ENCODE measurements at regions of chr7 and their contacts with region 1.

Region 1: GRCh38 chr7:43582503-43583423 is at the start of gene STK17A:
- DNase-seq: peak; percentile 85
- ATAC-seq: peak; percentile 94
- H3K4me3 ChIP-seq: peak within 1 kb of the TSS; percentile 91
- H3K27ac ChIP-seq: peak within 1 kb of the TSS; percentile 78
- H3K4me1 ChIP-seq: no peaks in the 10 kb centered on the region; the same call in 1 of the 2 replicates
- H3K27me3 ChIP-seq: peaks cover 2% of the 10 kb centered on the region; the same call in 1 of the 2 replicates
- CTCF ChIP-seq: peak; percentile 100
- POLR2A ChIP-seq: peak; percentile 99
- RAD21 ChIP-seq: peak; percentile 97
- total RNA-seq, gene STK17A: 50.5 and 81.9 TPM in 2 replicates

Region 2: DNA sequence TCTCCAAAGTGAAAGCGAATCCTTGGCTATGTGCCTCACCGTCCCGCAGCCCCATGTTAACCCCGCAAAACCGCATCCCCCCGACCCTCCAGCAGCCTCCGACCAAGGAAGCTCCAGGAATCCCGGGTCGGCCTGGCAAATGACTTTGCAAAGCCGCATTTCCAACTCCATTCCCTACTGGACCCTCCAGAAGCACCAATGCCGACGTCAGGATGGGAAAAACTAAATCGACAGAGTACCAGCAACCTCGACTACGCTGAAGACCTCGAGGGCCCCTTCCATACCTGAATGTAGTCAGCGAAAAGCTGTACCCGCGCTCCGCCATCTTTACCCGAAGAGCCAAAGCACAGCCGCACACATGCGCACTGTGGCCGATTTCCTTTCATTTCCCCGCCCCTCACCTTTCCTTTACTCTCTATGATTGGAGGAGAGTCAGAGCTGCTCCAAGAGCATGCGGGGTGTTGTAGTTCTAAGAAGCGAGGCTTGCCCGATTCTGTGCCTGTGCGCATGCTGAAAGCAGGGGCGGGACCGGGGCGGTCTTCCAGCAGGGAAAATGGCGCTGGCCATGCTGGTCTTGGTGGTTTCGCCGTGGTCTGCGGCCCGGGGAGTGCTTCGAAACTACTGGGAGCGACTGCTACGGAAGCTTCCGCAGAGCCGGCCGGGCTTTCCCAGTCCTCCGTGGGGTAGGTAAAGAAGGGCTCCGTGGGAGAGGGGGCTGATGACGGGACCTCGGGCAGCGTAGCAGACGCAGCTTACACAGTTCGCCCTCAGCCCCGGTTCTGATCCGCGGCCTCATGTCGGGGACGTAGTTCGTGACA is 650.7 kb before region 1 on chr7 and contains the starts of genes MRPL32 and PSMA2:
- CTCF ChIA-PET with region 1: no interaction called
- POLR2A ChIA-PET with region 1: no interaction called
- dilution Hi-C with region 1: no loop called
- in situ Hi-C with region 1: no loop called
- intact Hi-C with region 1: loop called (anchors 10 kb)
- DNase-seq: peak; percentile 97
- ATAC-seq: peak; percentile 99
- H3K4me3 ChIP-seq: peak within 1 kb of the TSS; percentile 69
- H3K27ac ChIP-seq: peak within 1 kb of the TSS; percentile 83
- H3K4me1 ChIP-seq: peaks cover 4% of the 10 kb centered on the region
- H3K27me3 ChIP-seq: no peaks in the 10 kb centered on the region
- CTCF ChIP-seq: no peak
- POLR2A ChIP-seq: peak; percentile 81
- RAD21 ChIP-seq: no peak
- total RNA-seq, gene MRPL32: 42.3 and 56.7 TPM in 2 replicates
- total RNA-seq, gene PSMA2: 138 and 217 TPM in 2 replicates

Region 3: DNA sequence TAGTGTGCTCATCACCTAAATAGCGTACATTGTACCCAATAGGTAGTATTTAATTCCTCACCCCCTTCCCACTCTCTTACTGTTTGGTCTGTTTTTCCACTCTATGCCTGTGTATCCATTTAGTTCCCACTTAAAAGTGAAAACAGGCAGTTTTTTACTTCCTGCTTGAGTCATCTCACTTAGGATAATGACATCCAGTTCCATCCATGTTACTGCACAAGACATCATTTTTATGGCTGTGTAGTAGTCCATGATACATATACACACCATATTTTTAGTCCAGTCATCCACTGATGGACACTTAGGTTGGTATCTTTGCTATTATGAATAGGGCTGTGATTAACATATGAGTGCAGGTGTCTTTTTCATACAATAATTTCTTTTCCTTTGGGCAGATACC is 10.2 kb after region 1 on chr7:
- CTCF ChIA-PET with region 1: interaction called, 10 read pairs
- POLR2A ChIA-PET with region 1: interaction called, 9 read pairs
- dilution Hi-C with region 1: no loop called
- in situ Hi-C with region 1: no loop called
- intact Hi-C with region 1: no loop called
- DNase-seq: no peak
- ATAC-seq: no peak
- H3K4me3 ChIP-seq: no peak overlapping the region
- H3K27ac ChIP-seq: no peak overlapping the region
- H3K4me1 ChIP-seq: peaks cover 12% of the 10 kb centered on the region
- H3K27me3 ChIP-seq: no peaks in the 10 kb centered on the region
- CTCF ChIP-seq: no peak
- POLR2A ChIP-seq: no peak
- RAD21 ChIP-seq: no peak

Region 4: GRCh38 chr7:43621729-43622448 is 39.1 kb after region 1 on chr7:
- CTCF ChIA-PET with region 1: interaction called, 15 read pairs
- POLR2A ChIA-PET with region 1: interaction called, 11 read pairs
- dilution Hi-C with region 1: no loop called
- in situ Hi-C with region 1: no loop called
- intact Hi-C with region 1: no loop called
- DNase-seq: no peak
- ATAC-seq: no peak
- H3K4me3 ChIP-seq: no peak overlapping the region
- H3K27ac ChIP-seq: no peak overlapping the region
- H3K4me1 ChIP-seq: peaks cover 19% of the 10 kb centered on the region
- H3K27me3 ChIP-seq: no peaks in the 10 kb centered on the region
- CTCF ChIP-seq: no peak
- POLR2A ChIP-seq: no peak
- RAD21 ChIP-seq: no peak

Region 5: GRCh38 chr7:43647673-43648472 is 65.1 kb after region 1 on chr7:
- CTCF ChIA-PET with region 1: interaction called, 13 read pairs
- POLR2A ChIA-PET with region 1: interaction called, 8 read pairs
- dilution Hi-C with region 1: no loop called
- in situ Hi-C with region 1: no loop called
- intact Hi-C with region 1: loop called (anchors 1 kb)
- DNase-seq: peak; percentile 100
- ATAC-seq: peak; percentile 68
- H3K4me3 ChIP-seq: peak overlapping the region; percentile 1; the same call in 1 of the 2 replicates
- H3K27ac ChIP-seq: peak overlapping the region; percentile 95
- H3K4me1 ChIP-seq: peaks cover 42% of the 10 kb centered on the region
- H3K27me3 ChIP-seq: no peaks in the 10 kb centered on the region
- CTCF ChIP-seq: no peak
- POLR2A ChIP-seq: peak; percentile 79
- RAD21 ChIP-seq: no peak

Region 6: GRCh38 chr7:43700059-43700501 is 117.3 kb after region 1 on chr7:
- CTCF ChIA-PET with region 1: interaction called, 104 read pairs
- POLR2A ChIA-PET with region 1: interaction called, 23 read pairs
- dilution Hi-C with region 1: no loop called
- in situ Hi-C with region 1: loop called (anchors 5 kb)
- intact Hi-C with region 1: loop called (anchors 1 kb)
- DNase-seq: peak; percentile 82
- ATAC-seq: peak; percentile 32; the same call in 1 of the 2 replicates
- H3K4me3 ChIP-seq: no peak overlapping the region
- H3K27ac ChIP-seq: no peak overlapping the region
- H3K4me1 ChIP-seq: peaks cover 9% of the 10 kb centered on the region
- H3K27me3 ChIP-seq: no peaks in the 10 kb centered on the region
- CTCF ChIP-seq: peak; percentile 89
- POLR2A ChIP-seq: peak; percentile 50; the same call in 1 of the 2 replicates
- RAD21 ChIP-seq: peak; percentile 93

Region 7: GRCh38 chr7:43834463-43835251 is 251.9 kb after region 1 on chr7:
- CTCF ChIA-PET with region 1: interaction called, 12 read pairs
- POLR2A ChIA-PET with region 1: interaction called, 4 read pairs
- dilution Hi-C with region 1: no loop called
- in situ Hi-C with region 1: loop called (anchors 5 kb)
- intact Hi-C with region 1: loop called (anchors 1 kb)
- DNase-seq: peak; percentile 40
- ATAC-seq: no peak
- H3K4me3 ChIP-seq: peak overlapping the region; percentile 3; the same call in 1 of the 2 replicates
- H3K27ac ChIP-seq: no peak overlapping the region
- H3K4me1 ChIP-seq: no peaks in the 10 kb centered on the region
- H3K27me3 ChIP-seq: peaks cover 2% of the 10 kb centered on the region; the same call in 1 of the 2 replicates
- CTCF ChIP-seq: no peak
- POLR2A ChIP-seq: no peak
- RAD21 ChIP-seq: no peak